ENCODE measurements at regions of chr15 and their contacts with region 1.

Region 1: DNA sequence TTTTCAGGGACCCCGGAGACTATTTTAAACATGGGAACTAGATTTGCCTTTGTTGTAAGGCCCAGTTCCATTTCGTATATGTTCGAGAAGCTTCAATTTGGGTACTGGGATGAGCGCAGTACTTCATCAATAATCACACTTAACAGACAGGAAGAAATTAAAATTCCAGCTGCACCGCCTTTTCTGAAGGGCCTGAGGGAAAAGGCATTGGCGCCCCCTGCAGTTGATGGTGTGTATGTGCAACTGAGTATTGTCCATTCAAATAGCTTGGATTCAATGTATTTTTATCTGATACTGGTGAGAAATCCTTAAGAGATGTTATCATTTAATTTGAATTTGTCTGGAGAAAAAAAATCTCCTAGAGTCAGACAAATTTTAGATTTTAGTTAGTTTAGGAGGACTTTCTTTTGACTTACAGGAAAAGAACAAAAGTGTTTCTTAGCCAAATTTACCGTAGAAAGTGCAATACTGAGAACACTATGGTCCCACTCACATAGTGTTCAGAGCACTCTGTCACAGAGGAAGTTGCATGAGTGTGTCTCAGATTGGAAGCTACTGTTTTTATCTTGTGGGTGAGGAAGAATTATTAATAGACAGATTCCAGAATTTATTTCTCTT is 5.4 kb upstream of the ALDH1A2 start:
- DNase-seq: peak; percentile 13 to 68
- ATAC-seq: peak in 1 of 2 experiments; percentile 30; a peak in 1 of 6 replicates
- H3K4me3 ChIP-seq: no peak overlapping the region
- H3K27ac ChIP-seq: no peak overlapping the region
- H3K4me1 ChIP-seq: peaks cover 2% of the 10 kb centered on the region; the same call in 1 of the 3 replicates
- CTCF ChIP-seq: peak; percentile 95
- EP300 ChIP-seq: no peak
- POLR2A ChIP-seq: no peak
- RAD21 ChIP-seq: peak; percentile 79 to 88

Region 2: DNA sequence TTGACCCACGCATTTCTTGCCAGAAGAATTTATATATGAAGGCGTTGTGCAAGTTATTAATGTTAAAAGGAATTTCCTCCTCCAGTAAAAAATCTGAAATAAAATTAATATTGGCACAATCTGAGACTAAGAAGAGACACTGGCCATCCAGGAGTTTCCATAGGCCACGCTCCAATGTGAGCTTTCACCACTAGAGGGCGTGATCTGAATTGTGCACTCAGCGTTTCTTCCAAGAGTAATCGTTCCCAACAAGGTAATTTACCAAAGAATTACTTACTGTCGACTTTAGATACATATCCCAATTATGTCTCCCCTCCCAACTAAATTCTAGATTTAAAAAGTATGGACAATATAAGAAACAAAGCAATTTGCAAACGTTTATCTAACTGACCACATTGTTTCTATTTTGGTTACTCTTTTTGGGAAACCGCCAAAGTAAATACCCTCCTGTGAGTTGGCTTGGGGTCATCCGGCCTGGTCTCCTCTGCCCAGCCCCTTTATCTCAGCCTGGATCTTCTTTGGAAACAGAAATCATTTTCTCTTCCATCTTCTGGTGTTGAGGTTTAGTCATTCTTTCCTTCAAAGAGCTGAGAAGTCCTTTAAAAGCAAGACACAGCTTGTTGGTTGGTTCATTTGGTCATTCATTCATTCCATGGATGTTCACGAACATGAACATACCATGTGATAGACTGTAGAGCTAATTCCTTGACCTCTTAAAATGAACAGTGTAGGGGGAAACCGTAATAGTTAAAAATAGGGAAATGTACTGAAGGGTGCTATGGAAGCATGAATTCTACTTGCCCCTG is 338.2 kb before region 1 on chr15:
- CTCF ChIA-PET with region 1: interaction called, 18 read pairs
- POLR2A ChIA-PET with region 1: no interaction called
- DNase-seq: peak; percentile 46 to 64
- ATAC-seq: peak; percentile 81 to 93
- H3K4me3 ChIP-seq: no peak overlapping the region
- H3K27ac ChIP-seq: no peak overlapping the region
- H3K4me1 ChIP-seq: no peaks in the 10 kb centered on the region
- CTCF ChIP-seq: peak; percentile 94
- EP300 ChIP-seq: no peak
- POLR2A ChIP-seq: no peak
- RAD21 ChIP-seq: peak; percentile 57 to 61

Region 3: DNA sequence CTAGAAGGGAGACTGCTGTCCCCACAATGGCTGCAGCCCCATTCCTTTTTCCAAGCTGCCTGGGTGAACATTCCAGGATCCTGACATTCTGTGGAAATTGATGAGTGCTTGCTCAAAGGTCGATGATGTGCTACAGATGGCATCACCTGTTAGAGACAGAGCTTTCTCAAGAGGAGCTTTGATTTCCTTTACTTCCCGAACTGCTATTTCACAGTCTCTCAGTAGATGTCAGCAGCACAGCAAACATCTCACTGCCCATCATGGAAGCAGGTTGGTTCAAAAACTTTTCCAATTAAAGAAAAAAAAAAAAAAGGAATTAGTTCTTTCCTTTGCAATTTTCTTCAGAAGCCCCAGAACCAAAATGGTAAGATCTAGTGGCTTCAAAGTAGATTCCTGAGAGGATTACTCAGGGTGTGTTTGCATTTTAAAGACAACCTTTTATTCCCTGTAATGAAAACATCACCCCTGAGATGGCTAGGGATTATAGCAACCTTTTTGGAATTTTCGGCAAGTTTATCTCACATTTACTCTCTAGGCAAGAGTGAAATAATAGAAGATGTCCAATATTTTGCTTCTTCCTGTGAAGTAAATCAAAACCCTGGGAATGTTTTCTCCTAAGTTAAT is 319.6 kb before region 1 on chr15:
- CTCF ChIA-PET with region 1: interaction called, 28 read pairs
- POLR2A ChIA-PET with region 1: no interaction called
- DNase-seq: peak; percentile 29 to 50
- ATAC-seq: peak; percentile 65 to 85; a peak in 4 of 6 replicates
- H3K4me3 ChIP-seq: no peak overlapping the region
- H3K27ac ChIP-seq: no peak overlapping the region
- H3K4me1 ChIP-seq: no peaks in the 10 kb centered on the region
- CTCF ChIP-seq: peak; percentile 63
- EP300 ChIP-seq: no peak
- POLR2A ChIP-seq: no peak
- RAD21 ChIP-seq: peak; percentile 71 to 76

Region 4: GRCh38 chr15:57866149-57866736 is 204.7 kb before region 1 on chr15:
- CTCF ChIA-PET with region 1: interaction called, 27 read pairs
- POLR2A ChIA-PET with region 1: no interaction called
- DNase-seq: peak; percentile 53 to 58
- ATAC-seq: peak; percentile 72 to 89
- H3K4me3 ChIP-seq: no peak overlapping the region
- H3K27ac ChIP-seq: no peak overlapping the region
- H3K4me1 ChIP-seq: no peaks in the 10 kb centered on the region
- CTCF ChIP-seq: peak; percentile 83
- EP300 ChIP-seq: no peak
- POLR2A ChIP-seq: no peak
- RAD21 ChIP-seq: peak; percentile 59 to 63

Region 5: DNA sequence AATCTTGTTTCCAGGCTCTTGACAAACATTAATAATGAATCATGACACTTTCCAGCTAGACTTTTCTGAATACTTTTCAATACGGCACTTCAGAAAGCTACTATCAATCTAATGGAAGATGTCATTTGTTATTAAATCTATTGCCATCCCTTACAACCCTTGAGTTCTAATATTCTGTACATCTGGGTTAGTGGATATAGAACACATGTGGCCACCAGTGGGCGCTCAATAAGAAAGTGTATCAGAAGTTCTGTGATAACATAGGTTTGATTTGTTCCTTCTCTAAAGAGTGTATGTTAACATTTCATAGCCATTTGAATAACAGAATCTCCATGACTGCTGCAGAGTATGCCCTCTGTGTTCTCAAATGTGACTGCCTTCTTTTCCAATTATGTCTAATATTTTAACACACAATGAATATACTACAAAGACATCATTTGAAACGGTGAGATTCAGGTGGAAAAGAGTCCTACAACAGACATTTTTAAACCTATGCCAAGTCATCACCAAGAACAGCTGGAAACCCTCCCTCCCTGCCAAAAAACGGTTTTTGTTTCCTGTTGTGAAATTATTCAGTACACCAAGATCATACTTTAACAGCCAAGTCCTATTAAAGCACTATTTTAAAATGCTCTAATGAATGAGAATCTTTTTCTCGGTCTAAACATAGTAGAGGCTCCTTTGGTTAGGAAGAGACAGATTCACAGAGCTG is 27.6 kb before region 1 on chr15:
- CTCF ChIA-PET with region 1: interaction called, 23 read pairs
- POLR2A ChIA-PET with region 1: no interaction called
- DNase-seq: peak; percentile 28 to 49
- ATAC-seq: peak; percentile 82 to 89; a peak in 5 of 6 replicates
- H3K4me3 ChIP-seq: no peak overlapping the region
- H3K27ac ChIP-seq: no peak overlapping the region
- H3K4me1 ChIP-seq: no peaks in the 10 kb centered on the region
- CTCF ChIP-seq: peak; percentile 81
- EP300 ChIP-seq: no peak
- POLR2A ChIP-seq: no peak
- RAD21 ChIP-seq: peak; percentile 40 to 48; a peak in 3 of 5 replicates

Region 6: GRCh38 chr15:58087871-58088270 is 17.0 kb after region 1 on chr15:
- CTCF ChIA-PET with region 1: interaction called, 24 read pairs
- POLR2A ChIA-PET with region 1: no interaction called
- DNase-seq: no peak
- ATAC-seq: no peak
- H3K4me3 ChIP-seq: no peak overlapping the region
- H3K27ac ChIP-seq: no peak overlapping the region
- H3K4me1 ChIP-seq: no peaks in the 10 kb centered on the region
- CTCF ChIP-seq: no peak
- EP300 ChIP-seq: no peak
- POLR2A ChIP-seq: no peak
- RAD21 ChIP-seq: no peak

Region 7: GRCh38 chr15:58182460-58183163 is 111.7 kb after region 1 on chr15:
- CTCF ChIA-PET with region 1: interaction called, 31 read pairs
- POLR2A ChIA-PET with region 1: no interaction called
- DNase-seq: peak; percentile 65 to 75
- ATAC-seq: peak; percentile 95 to 100
- H3K4me3 ChIP-seq: no peak overlapping the region
- H3K27ac ChIP-seq: no peak overlapping the region
- H3K4me1 ChIP-seq: no peaks in the 10 kb centered on the region
- CTCF ChIP-seq: peak; percentile 96
- EP300 ChIP-seq: no peak
- POLR2A ChIP-seq: no peak
- RAD21 ChIP-seq: peak; percentile 95 to 97

Region 8: DNA sequence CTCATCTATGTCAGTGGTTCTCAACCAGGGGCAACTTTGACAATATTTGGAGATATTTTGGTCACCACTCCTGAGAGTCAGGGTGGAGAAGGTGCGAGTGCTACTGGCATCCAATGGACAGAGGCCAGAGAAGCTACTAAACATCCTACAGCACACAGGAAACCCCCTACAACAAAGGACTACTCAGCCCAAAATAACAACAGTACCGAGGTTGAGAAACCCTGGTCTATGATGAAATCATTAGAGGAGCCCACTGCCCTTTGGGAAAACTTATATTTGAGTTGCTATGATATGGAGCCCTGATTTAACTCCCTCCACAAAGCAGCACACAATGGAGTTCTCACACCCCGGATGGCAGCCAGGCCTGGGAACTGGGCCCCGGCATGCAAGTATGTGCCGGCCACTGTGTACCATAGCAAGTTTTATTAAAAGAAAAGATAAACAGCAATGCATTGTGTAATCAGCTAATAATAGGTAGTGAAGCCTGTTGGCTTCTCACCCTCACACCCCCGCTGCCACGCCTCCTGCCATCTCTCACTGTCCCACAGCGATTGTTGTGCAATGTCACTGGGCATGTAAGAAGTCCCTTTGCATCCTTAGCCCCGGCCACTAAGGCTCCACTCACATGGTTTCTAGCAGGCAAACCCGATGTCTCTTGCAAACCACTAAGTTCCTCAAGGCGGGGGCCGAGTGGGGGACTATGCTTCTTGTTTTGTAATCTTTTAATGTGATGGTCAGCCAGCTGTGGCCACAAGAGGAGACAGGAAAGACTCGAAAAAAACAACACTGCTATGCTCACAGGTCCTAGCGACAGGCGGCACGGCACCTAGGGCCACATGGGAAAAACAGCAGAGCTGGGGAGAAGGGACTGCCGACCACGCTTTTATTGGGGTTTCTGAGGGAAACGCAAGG is 177.2 kb after region 1 on chr15:
- CTCF ChIA-PET with region 1: no interaction called
- POLR2A ChIA-PET with region 1: no interaction called
- DNase-seq: no peak
- ATAC-seq: no peak
- H3K4me3 ChIP-seq: no peak overlapping the region
- H3K27ac ChIP-seq: no peak overlapping the region
- H3K4me1 ChIP-seq: no peaks in the 10 kb centered on the region
- CTCF ChIP-seq: no peak
- EP300 ChIP-seq: no peak
- POLR2A ChIP-seq: no peak
- RAD21 ChIP-seq: no peak

Measured in A549 (cell line).